Ascending aorta (tissue), 2 donors: ENCODE measurements at regions of chr5 and their contacts with region 1.

Region 1: DNA sequence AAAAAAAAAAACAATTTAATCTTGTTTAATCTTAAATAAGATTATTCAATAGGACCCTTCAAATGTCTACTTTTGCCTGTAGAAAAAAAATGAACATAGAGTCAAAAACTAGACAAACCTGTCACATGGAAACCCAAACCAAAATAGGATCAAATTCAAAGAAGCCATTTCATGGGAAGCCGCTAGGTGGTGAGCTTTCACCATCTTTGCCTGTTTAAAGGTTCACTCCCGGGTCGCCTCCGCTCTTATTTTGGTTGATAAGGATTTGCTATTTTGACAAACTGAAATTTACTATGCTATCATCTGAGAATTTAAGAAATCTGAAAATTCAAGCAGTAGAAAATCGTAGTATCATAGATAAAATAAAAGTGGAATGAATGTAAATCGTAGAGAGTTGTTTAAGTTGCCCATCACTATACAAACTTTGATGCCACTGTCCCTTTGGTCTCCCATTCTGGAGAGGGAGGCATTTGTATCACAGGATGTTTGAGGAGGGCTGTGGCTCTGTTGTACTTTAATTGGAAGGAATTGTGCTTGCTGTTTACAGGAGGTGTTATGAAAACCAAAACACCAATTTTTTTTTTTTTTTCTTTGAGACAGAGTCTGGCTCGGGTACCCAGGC is 43.5 kb upstream of the DNAH5 start:
- DNase-seq: no peak
- H3K4me3 ChIP-seq: no peak overlapping the region
- H3K27ac ChIP-seq: no peak overlapping the region
- H3K4me1 ChIP-seq: no peaks in the 10 kb centered on the region
- H3K27me3 ChIP-seq: no peaks in the 10 kb centered on the region
- CTCF ChIP-seq: peak; percentile 64 to 89 (median 83)

Region 2: DNA sequence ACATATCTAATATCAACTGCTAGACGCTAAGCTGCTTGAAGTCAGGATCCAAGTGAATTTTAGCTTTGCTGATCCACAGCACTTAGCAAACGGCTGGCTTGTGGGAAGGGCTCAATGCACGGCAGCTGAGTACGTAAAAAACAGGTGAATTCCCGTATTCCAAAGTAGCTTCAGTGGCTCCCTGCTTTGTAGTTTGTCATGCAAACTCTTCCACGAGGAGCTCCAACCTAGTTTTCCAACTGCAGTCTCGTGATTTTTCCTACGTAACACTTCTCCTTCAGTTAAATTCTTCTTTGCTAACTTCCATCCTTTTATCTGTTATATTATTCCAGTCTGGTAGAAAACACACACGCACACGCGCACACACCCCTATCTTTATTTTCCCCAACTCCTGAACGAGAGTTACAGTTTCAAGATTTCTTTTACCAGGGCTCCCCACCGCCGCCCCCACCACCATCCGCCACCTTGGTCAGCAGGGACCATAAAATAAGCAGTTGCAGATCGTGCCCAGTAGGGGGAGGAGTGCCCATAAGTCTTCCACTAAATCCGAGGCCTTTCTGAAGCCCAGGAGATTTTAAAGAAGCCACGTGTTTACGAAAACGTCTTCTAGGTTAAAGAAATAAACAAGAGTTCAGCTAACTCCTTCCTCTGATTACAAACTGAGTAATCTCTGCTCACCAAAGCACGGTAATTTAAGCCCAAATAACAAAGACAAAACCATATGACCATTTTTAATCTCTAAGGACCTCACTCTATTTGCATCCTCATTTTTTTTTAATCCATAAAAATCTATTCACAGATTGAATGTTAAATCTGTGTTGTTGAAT is 120.4 kb after region 1 on chr5:
- intact Hi-C with region 1: loop called (anchors 5 kb)
- DNase-seq: peak in 1 of 2 donors; percentile 77
- H3K4me3 ChIP-seq: peak overlapping the region; percentile 0 to 50
- H3K27ac ChIP-seq: peak overlapping the region; percentile 19 to 27
- H3K4me1 ChIP-seq: peaks cover 2% of the 10 kb centered on the region in 2 donors
- H3K27me3 ChIP-seq: no peaks in the 10 kb centered on the region
- CTCF ChIP-seq: peak; percentile 40 to 83 (median 79)

Region 3: GRCh38 chr5:14270209-14270702 is 282.3 kb after region 1 on chr5:
- intact Hi-C with region 1: loop called (anchors 1 kb)
- DNase-seq: peak in 1 of 2 donors; percentile 87
- H3K4me3 ChIP-seq: no peak overlapping the region
- H3K27ac ChIP-seq: peak overlapping the region; percentile 64 to 69
- H3K4me1 ChIP-seq: peaks cover 16 to 37% of the 10 kb centered on the region in 2 donors
- H3K27me3 ChIP-seq: no peaks in the 10 kb centered on the region
- CTCF ChIP-seq: peak; percentile 66 to 76 (median 76)

Region 4: DNA sequence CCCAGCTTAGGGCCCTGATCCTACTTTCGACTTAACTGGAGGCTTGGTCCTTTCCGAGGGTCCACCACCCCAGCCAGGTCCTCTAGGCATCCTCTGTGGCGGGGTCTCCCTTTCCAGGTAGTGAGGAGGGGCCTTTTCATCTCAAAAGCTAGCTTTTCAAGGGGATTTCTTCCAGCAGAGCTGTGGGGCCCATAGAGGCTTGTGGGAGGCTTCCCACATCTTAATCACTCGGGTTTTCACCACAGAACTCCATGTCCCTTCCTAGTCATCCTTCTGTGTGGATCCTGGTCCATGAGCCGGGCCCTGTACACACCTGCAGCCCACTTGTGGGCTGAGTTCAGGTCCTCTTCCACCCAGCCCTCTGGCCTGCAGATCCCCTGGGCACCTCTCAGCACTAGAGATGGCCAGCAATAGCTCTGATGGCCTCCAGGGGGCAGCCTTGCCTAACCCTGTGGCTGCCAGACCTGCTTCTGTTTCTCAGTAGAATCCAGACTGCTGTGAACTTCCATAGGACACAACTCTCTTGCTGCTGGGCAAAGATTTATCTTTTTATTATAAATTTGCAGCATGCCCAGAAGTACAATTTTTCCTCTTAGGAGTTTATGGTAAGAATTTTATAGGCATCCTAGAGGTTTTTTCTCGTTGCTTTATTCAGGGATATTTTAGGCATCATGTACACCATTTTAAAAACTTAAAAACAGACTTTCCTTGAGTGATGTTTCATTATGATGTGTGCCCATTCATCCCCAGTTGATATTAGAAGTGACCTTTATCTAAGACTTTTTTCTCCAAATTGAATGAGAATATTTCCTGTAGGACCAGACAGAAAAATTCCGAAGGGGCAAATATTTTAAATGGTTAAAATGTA is 364.1 kb after region 1 on chr5:
- intact Hi-C with region 1: loop called (anchors 5 kb)
- DNase-seq: peak in 1 of 2 donors; percentile 72
- H3K4me3 ChIP-seq: no peak overlapping the region
- H3K27ac ChIP-seq: no peak overlapping the region
- H3K4me1 ChIP-seq: peaks cover 0 to 7% of the 10 kb centered on the region in 2 donors
- H3K27me3 ChIP-seq: no peaks in the 10 kb centered on the region
- CTCF ChIP-seq: peak; percentile 73 to 98 (median 93)

Region 5: DNA sequence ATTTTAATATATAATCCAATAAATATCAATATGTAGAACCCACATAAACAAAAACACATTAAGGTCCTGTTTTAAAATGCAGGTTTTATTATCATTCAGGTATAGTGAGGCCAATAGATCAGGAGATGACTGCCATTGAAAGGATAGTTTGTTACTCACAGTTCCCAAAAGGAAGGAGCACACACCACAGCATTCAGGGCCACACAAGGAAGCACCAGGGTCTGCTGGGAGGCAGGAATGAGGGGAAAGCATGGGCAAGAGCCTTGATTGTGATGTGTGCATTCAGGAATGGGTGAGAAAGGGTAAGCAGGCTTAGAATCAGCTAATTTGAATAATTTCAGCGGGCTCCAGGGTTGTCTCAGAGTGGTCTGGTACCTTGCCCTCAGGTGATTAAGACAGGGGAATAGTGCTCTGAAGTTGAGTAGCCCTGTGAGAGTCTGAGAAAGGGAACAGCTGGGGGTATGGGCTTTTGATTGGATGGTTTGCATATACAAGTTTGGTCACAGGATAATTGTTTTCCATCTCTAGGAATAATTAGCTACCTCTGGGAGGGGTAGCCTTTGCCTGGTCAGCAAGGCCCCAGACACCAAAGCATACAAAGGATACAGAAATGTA is 656.8 kb after region 1 on chr5:
- intact Hi-C with region 1: loop called (anchors 5 kb)
- DNase-seq: no peak
- H3K4me3 ChIP-seq: no peak overlapping the region
- H3K27ac ChIP-seq: no peak overlapping the region
- H3K4me1 ChIP-seq: no peaks in the 10 kb centered on the region
- H3K27me3 ChIP-seq: no peaks in the 10 kb centered on the region
- CTCF ChIP-seq: no peak